CD8-positive, alpha-beta T cell (primary cell): ENCODE measurements at regions of chr1 and their contacts with region 1.

Region 1: DNA sequence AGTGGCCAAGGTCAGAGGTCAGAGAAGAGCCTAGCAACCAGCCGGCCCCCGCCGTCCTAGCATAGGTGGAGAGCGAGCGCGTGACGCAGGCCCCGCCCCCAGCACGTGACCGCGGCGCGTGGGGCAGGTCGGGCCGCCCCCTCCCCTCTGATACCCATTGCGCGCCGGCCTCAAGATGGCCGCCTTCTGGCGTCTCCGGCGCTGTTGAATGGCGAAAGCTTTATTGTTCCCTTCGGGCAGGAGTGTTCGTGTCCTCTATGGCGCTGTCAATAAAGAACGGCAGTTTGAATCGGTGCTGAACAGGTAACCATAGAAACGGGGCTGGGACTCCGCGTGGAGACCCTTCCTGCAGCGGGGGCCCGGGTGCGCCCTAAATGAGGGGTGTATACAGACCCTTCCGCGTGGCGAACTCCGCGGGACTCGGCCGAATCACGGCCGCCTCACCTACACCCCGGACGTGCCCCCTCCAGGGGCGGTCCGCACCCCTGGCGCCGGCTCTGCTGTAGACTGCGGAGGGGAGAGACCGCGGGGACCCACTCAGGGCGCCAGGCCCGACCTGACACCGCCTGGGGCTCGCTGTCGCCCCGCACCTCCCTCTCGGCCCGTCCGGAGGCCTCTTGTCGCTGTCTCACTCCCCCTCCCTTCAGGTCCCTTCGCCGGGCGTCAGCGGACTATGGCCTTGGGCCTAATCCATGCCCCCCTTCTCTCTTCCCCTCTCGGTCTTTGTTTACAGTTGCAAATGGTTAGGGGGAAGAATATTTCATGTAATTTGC is at the start of gene ZBTB40:
- DNase-seq: peak; percentile 83 to 98 (median 93)
- ATAC-seq: peak; percentile 89
- H3K4me3 ChIP-seq: peak within 1 kb of the TSS; percentile 71 to 92
- H3K4me3 Mint-ChIP-seq: peak within 1 kb of the TSS; percentile 93
- H3K27ac ChIP-seq: peak within 1 kb of the TSS; percentile 82 to 93
- H3K27ac Mint-ChIP-seq: peak within 1 kb of the TSS; percentile 93
- H3K4me1 ChIP-seq: peaks cover 18% of the 10 kb centered on the region
- H3K4me1 Mint-ChIP-seq: peaks cover 46% of the 10 kb centered on the region
- H3K27me3 ChIP-seq: no peaks in the 10 kb centered on the region
- H3K27me3 Mint-ChIP-seq: no peaks in the 10 kb centered on the region
- CTCF ChIP-seq: no peak
- total RNA-seq, gene ZBTB40: 20.9 to 21.3 TPM

Region 2: DNA sequence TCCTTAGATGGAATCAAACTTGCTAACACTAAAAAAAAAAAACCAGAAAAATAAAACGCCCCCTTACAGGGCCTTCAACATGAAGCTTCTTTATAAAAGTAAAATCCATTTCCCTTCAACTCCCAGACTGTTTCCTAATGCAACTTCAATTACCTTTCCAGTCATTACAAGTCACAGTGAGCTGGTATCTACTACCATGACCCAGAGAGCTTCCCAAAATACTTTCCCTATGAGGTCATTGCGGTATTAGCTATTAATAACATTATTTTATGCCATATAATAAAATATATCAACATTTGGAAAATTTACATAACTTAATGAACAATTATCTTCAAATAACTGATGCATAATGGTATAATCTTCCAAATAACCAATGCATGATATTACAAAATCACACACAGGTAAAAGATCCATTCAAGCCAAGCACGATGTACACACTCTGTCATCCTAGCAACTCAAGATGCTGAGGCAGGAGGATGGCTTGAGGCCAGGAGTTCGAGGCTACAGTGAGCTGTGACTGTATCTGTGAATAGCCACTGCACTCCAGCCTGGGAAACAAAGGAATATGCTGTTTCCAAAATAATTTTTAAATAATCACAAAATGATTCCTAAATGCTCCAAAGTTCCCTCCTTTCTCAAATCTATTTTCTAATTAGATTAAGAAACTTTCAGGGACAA is 1299.3 kb before region 1 on chr1:
- CTCF ChIA-PET with region 1: no interaction called
- POLR2A ChIA-PET with region 1: no interaction called
- intact Hi-C with region 1: no loop called
- DNase-seq: no peak
- ATAC-seq: no peak
- H3K4me3 ChIP-seq: no peak overlapping the region
- H3K4me3 Mint-ChIP-seq: no peak overlapping the region
- H3K27ac ChIP-seq: no peak overlapping the region
- H3K27ac Mint-ChIP-seq: no peak overlapping the region
- H3K4me1 ChIP-seq: no peaks in the 10 kb centered on the region
- H3K4me1 Mint-ChIP-seq: peaks cover 2% of the 10 kb centered on the region
- H3K27me3 ChIP-seq: no peaks in the 10 kb centered on the region
- H3K27me3 Mint-ChIP-seq: no peaks in the 10 kb centered on the region
- CTCF ChIP-seq: no peak

Region 3: DNA sequence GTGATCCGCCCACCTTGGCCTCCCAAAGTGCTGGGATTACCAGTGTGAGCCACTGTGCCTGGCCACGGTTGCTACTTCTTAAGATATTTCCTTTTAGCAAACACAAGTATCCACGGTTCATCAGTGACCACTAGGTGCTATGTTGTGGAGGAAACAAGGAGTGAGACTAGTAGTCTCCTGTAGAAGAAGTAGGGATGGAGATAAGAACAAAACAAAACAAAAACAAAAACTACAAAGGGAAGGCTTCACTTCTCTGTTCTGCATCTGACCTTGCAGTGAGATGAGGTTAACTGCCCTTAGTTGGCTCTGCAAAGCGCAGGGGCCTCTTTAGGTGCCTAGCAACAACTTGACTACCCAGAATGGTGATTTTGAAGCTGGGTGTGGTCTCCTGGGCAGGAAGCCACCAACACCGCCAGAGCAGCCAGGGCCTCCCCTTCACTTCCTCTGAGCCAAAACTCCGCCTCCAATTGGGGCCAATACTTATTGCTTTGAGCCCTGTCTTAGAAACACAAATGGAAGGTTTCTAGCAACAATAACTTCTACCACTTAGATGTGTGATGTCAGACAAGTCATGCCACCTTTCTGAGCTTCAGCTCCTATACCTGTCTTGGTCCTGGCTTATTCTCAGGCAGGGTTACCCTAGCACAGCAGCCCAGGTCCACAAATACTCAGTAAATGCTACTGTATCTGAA is 412.1 kb before region 1 on chr1:
- CTCF ChIA-PET with region 1: no interaction called
- POLR2A ChIA-PET with region 1: no interaction called
- intact Hi-C with region 1: loop called in 1 of 2 experiments (anchors 5 kb)
- DNase-seq: peak; percentile 80 to 99 (median 90)
- ATAC-seq: peak; percentile 94
- H3K4me3 ChIP-seq: peak overlapping the region; percentile 40 to 46
- H3K4me3 Mint-ChIP-seq: peak overlapping the region; percentile 77
- H3K27ac ChIP-seq: peak overlapping the region; percentile 92 to 93
- H3K27ac Mint-ChIP-seq: peak overlapping the region; percentile 99
- H3K4me1 ChIP-seq: peaks cover 69% of the 10 kb centered on the region
- H3K4me1 Mint-ChIP-seq: peaks cover 56% of the 10 kb centered on the region
- H3K27me3 ChIP-seq: no peaks in the 10 kb centered on the region
- H3K27me3 Mint-ChIP-seq: no peaks in the 10 kb centered on the region
- CTCF ChIP-seq: no peak

Region 4: GRCh38 chr1:22431965-22432364 is 19.9 kb before region 1 on chr1:
- CTCF ChIA-PET with region 1: no interaction called
- POLR2A ChIA-PET with region 1: no interaction called
- intact Hi-C with region 1: loop called (anchors 1 kb)
- DNase-seq: no peak
- ATAC-seq: no peak
- H3K4me3 ChIP-seq: no peak overlapping the region
- H3K4me3 Mint-ChIP-seq: no peak overlapping the region
- H3K27ac ChIP-seq: no peak overlapping the region
- H3K27ac Mint-ChIP-seq: no peak overlapping the region
- H3K4me1 ChIP-seq: no peaks in the 10 kb centered on the region
- H3K4me1 Mint-ChIP-seq: no peaks in the 10 kb centered on the region
- H3K27me3 ChIP-seq: no peaks in the 10 kb centered on the region
- H3K27me3 Mint-ChIP-seq: peaks cover 20% of the 10 kb centered on the region
- CTCF ChIP-seq: no peak

Region 5: GRCh38 chr1:23069675-23070074 is 617.8 kb after region 1 on chr1:
- CTCF ChIA-PET with region 1: no interaction called
- POLR2A ChIA-PET with region 1: no interaction called
- intact Hi-C with region 1: no loop called
- DNase-seq: no peak
- ATAC-seq: no peak
- H3K4me3 ChIP-seq: no peak overlapping the region
- H3K4me3 Mint-ChIP-seq: no peak overlapping the region
- H3K27ac ChIP-seq: no peak overlapping the region
- H3K27ac Mint-ChIP-seq: no peak overlapping the region
- H3K4me1 ChIP-seq: no peaks in the 10 kb centered on the region
- H3K4me1 Mint-ChIP-seq: no peaks in the 10 kb centered on the region
- H3K27me3 ChIP-seq: no peaks in the 10 kb centered on the region
- H3K27me3 Mint-ChIP-seq: no peaks in the 10 kb centered on the region
- CTCF ChIP-seq: no peak